GM12878 (cell line): ENCODE measurements at regions of chr2 and their contacts with region 1.

Region 1: GRCh38 chr2:3386448-3386958 is 7.0 kb downstream of the TRAPPC12 start:
- DNase-seq: no peak
- ATAC-seq: no peak
- H3K4me3 ChIP-seq: no peak overlapping the region
- H3K27ac ChIP-seq: no peak overlapping the region
- H3K4me1 ChIP-seq: no peaks in the 10 kb centered on the region
- H3K27me3 ChIP-seq: no peaks in the 10 kb centered on the region
- CTCF ChIP-seq: no peak
- EP300 ChIP-seq: no peak
- POLR2A ChIP-seq: no peak
- RAD21 ChIP-seq: no peak

Region 2: DNA sequence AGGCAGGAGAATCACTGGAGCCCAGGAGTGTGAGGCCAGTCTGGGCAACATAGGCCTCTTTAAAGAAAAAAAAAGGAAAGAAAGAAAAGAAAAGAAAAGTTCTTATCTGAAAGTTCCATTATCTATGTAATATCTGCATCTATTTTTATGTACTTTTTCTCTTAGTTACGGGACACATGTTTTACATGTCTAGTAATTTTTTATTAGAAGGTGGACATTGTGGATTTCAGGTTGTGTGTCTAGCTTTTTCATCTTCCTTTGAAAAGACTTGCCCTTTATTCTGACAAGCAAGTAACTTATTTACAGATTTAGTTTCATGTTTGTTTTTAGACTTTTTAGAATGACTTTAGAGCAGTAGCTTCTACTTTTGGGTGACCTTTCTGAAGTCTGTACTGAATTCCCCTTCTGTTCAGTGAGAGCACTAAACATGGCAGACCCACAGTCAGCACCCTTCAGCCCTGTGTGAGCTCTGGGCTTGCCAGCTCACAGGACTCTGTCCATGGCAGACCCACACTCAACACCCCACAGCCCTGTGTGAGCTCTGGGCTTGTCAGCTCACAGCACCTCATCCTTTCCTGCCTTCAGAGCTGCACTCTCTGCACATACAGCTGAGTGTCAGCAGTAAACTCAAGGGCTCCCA is 10.5 kb after region 1 on chr2:
- CTCF ChIA-PET with region 1: interaction called, 10 read pairs
- POLR2A ChIA-PET with region 1: interaction called, 3 read pairs
- RAD21 ChIA-PET with region 1: interaction called, 4 read pairs
- SMC1A ChIA-PET with region 1: interaction called, 18 read pairs
- in situ Hi-C with region 1: no loop called
- intact Hi-C with region 1: no loop called
- DNase-seq: no peak
- ATAC-seq: no peak
- H3K4me3 ChIP-seq: no peak overlapping the region
- H3K27ac ChIP-seq: no peak overlapping the region
- H3K4me1 ChIP-seq: no peaks in the 10 kb centered on the region
- H3K27me3 ChIP-seq: no peaks in the 10 kb centered on the region
- CTCF ChIP-seq: no peak
- EP300 ChIP-seq: no peak
- POLR2A ChIP-seq: no peak
- RAD21 ChIP-seq: no peak